Lower lobe of right lung (tissue), 2 donors: ENCODE measurements at regions of chr2 and their contacts with region 1.

Region 1: DNA sequence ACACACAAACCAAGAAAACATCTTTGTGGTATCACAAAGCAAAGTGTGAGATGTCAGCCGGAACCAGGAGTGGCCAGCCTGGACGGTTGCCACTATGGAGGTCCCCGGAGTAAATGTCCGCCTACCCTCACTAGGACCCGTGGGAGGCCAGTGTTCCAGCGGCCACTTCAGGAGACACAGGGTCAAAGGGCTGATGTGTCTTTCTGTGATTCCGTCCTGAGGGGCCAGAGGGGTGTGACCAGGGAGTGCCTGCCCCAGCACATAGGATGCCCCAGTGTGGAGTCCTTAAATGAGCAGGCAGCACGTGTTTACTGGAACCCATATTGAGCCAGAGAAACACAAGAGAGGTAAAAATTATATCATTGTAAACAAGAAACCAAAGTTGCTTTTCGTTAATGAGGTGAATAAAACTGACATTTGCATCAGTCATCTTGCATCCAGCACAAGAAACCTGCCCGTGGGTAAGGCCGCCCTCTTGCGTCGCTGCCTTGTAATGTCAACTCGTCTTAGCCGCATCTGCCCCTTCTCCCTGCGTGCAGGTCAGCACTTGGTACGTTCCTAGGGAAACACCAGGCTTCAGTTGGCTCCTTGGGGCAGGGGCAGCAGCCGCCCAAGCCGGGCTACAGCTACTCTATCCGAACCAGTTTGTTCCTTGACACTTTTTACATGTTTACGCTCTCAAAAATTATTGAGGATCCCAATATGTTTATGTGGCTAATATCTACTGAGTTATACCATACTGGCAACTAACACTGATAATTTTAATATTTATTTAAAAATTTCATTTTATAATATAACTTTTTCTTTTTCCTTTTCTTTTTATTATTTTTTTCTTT is 46.7 kb upstream of the LAPTM4A start:
- DNase-seq: peak; percentile 89
- ATAC-seq: peak; percentile 93 to 94
- H3K4me3 ChIP-seq: no peak overlapping the region
- H3K27ac ChIP-seq: no peak overlapping the region
- H3K4me1 ChIP-seq: no peaks in the 10 kb centered on the region
- H3K27me3 ChIP-seq: peaks cover 4% of the 10 kb centered on the region
- CTCF ChIP-seq: peak; percentile 93

Region 2: DNA sequence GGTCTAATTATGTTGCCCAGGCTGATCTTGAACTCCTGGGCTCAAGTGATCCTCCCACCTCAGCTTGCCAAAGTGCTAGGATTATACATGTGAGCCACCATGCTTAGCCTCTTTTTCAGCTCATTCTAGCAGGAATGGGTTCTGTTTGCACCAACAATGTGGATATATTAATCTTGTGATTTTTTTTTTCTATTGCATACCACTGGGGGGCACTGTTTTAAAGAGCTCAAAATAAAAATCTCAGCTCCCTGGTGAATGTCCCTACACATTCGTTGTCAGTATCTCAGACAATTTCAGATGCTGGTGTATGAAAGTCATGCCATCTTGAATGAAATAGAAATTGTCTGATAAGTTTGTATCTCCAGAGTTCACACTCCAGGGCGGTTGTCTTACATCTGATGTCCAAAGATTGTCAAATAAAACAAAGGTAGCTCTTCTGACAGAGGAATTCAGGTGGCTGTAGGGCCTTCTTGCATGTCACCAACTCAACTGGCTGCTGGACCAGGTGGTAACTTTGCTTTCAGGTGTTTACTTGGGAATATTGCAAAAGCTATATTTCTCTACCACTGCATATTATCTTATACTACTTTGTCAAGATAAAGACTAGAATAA is 82.5 kb before region 1 on chr2:
- intact Hi-C with region 1: loop called (anchors 5 kb)
- DNase-seq: no peak
- ATAC-seq: peak; percentile 44 to 55
- H3K4me3 ChIP-seq: no peak overlapping the region
- H3K27ac ChIP-seq: no peak overlapping the region
- H3K4me1 ChIP-seq: peaks cover 20% of the 10 kb centered on the region
- H3K27me3 ChIP-seq: peaks cover 12% of the 10 kb centered on the region
- CTCF ChIP-seq: peak; percentile 65

Region 3: GRCh38 chr2:20247084-20247483 is 149.0 kb after region 1 on chr2:
- intact Hi-C with region 1: no loop called
- DNase-seq: no peak
- ATAC-seq: no peak
- H3K4me3 ChIP-seq: no peak overlapping the region
- H3K27ac ChIP-seq: no peak overlapping the region
- H3K4me1 ChIP-seq: no peaks in the 10 kb centered on the region
- H3K27me3 ChIP-seq: no peaks in the 10 kb centered on the region
- CTCF ChIP-seq: no peak